Endothelial cell of umbilical vein (primary cell): ENCODE measurements at regions of chr4 and their contacts with region 1.

Region 1: DNA sequence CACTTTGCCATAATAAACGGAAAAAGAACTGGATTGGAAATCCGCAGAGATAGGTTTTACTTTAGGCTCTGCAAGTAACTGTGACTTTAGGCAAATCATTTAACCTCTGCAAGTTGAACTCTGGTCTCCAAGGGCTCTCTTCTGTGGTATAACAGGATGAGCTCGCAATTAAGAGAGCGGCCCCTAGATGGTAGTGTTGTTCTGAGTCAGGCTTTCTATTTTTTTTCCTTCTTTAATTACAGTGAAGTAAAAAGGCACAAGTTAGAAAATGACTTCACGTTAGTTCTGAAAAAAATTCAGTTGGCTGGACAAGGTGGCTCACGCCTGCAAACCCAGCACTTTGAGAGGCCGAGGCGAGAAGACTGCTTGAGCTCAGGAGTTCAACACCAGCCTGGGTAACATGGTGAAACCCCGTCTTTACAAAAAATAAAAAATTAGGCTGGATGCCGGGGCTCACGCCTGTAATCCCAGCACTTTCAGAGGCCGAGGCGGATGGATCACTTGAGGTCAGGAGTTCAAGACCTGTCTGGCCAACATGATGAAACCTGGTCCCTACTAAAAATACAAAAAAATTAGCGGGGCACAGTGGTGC is 18.0 kb downstream of the RPS3A start:
- DNase-seq: peak; percentile 86
- H3K4me3 ChIP-seq: no peak overlapping the region
- H3K27ac ChIP-seq: no peak overlapping the region
- H3K4me1 ChIP-seq: no peaks in the 10 kb centered on the region
- H3K27me3 ChIP-seq: no peaks in the 10 kb centered on the region
- CTCF ChIP-seq: peak; percentile 53 to 61
- POLR2A ChIP-seq: no peak

Region 2: DNA sequence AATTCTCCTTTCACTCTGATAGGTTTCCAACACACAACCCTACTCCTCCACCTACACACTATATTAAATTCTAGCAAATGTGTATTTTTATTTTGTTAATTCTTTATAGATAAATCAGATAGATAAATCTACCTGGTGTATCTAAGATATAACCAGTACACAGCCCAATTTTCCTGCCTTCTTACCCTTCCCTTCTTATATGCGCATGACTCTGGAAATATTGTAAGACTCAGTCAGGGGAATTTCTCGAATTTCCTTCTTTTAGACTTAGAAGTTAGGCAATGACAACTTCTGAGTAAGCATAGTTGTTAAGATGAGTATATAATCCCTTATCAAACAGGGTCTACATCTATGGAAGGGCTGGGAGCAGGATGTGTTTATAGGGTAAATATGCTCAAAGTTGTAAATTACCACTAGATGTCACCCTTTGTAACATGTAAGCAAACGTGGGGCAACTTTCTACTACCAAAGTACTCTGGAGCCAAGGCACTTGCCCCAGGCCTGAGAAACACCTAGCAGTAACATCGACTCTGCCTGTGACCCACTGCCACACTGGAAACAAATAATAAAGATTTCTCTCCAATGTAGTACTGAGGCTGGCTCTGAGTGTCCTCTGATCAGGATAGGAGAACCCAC is 1746.6 kb before region 1 on chr4:
- CTCF ChIA-PET with region 1: no interaction called
- POLR2A ChIA-PET with region 1: no interaction called
- dilution Hi-C with region 1: no loop called
- intact Hi-C with region 1: no loop called
- DNase-seq: peak; percentile 46
- H3K4me3 ChIP-seq: no peak overlapping the region
- H3K27ac ChIP-seq: no peak overlapping the region
- H3K4me1 ChIP-seq: no peaks in the 10 kb centered on the region
- H3K27me3 ChIP-seq: no peaks in the 10 kb centered on the region
- CTCF ChIP-seq: peak in 1 of 2 donors; percentile 16
- POLR2A ChIP-seq: no peak

Region 3: GRCh38 chr4:151276787-151277562 is 159.5 kb after region 1 on chr4 and contains the start of gene PRSS48:
- CTCF ChIA-PET with region 1: interaction called, 17 read pairs
- POLR2A ChIA-PET with region 1: no interaction called
- dilution Hi-C with region 1: no loop called
- intact Hi-C with region 1: loop called (anchors 1 kb)
- DNase-seq: peak; percentile 65
- H3K4me3 ChIP-seq: no peak within 1 kb of the TSS
- H3K27ac ChIP-seq: no peak within 1 kb of the TSS
- H3K4me1 ChIP-seq: no peaks in the 10 kb centered on the region
- H3K27me3 ChIP-seq: no peaks in the 10 kb centered on the region
- CTCF ChIP-seq: peak; percentile 87 to 88
- POLR2A ChIP-seq: no peak
- total RNA-seq, gene PRSS48: not detected in 2 replicates

Region 4: DNA sequence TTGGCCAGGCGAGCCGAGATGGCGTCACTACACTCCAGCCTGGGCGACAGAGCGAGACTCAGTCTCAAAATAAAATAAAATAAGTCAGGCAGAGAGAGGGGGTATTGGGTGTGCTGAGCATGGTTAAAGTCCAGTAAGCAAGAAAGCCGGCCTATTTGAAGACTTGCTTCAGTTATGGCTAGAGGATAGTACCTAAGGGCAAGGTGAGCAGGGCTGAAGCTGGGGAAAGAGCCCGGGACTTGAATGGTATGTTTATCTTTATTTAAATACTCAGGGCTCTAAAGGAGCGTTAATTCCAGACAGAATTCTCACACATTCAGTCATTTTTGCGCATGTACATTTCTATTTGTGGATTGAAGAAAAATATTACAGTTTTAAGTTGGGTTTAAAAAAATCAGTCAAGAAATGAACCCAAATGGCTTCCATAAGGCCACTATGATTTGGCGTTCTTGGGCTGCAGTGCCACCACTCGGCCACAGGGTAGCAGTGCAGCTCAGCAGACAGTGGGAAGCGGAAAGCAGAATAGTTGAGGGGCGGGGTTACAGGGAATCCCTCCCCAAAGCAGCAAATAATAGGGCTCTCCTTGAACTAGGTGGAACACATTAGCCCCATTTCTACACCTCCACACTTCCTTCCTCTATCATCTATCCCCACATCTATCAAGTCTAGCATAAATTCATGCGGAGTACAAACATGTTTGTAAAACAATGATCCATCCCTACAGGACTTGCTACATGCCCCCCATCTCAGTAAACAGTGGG is 245.1 kb after region 1 on chr4:
- CTCF ChIA-PET with region 1: interaction called, 26 read pairs
- POLR2A ChIA-PET with region 1: no interaction called
- dilution Hi-C with region 1: no loop called
- intact Hi-C with region 1: loop called (anchors 1 kb)
- DNase-seq: peak; percentile 87
- H3K4me3 ChIP-seq: no peak overlapping the region
- H3K27ac ChIP-seq: no peak overlapping the region
- H3K4me1 ChIP-seq: no peaks in the 10 kb centered on the region
- H3K27me3 ChIP-seq: no peaks in the 10 kb centered on the region
- CTCF ChIP-seq: peak; percentile 96 to 100
- POLR2A ChIP-seq: no peak

Region 5: GRCh38 chr4:151604238-151604637 is 486.8 kb after region 1 on chr4:
- CTCF ChIA-PET with region 1: interaction called, 63 read pairs
- POLR2A ChIA-PET with region 1: no interaction called
- dilution Hi-C with region 1: no loop called
- intact Hi-C with region 1: loop called (anchors 1 kb)
- DNase-seq: peak; percentile 33
- H3K4me3 ChIP-seq: no peak overlapping the region
- H3K27ac ChIP-seq: no peak overlapping the region
- H3K4me1 ChIP-seq: no peaks in the 10 kb centered on the region
- H3K27me3 ChIP-seq: peaks cover 0 to 7% of the 10 kb centered on the region in 2 experiments
- CTCF ChIP-seq: peak; percentile 29 to 44
- POLR2A ChIP-seq: no peak

Region 6: DNA sequence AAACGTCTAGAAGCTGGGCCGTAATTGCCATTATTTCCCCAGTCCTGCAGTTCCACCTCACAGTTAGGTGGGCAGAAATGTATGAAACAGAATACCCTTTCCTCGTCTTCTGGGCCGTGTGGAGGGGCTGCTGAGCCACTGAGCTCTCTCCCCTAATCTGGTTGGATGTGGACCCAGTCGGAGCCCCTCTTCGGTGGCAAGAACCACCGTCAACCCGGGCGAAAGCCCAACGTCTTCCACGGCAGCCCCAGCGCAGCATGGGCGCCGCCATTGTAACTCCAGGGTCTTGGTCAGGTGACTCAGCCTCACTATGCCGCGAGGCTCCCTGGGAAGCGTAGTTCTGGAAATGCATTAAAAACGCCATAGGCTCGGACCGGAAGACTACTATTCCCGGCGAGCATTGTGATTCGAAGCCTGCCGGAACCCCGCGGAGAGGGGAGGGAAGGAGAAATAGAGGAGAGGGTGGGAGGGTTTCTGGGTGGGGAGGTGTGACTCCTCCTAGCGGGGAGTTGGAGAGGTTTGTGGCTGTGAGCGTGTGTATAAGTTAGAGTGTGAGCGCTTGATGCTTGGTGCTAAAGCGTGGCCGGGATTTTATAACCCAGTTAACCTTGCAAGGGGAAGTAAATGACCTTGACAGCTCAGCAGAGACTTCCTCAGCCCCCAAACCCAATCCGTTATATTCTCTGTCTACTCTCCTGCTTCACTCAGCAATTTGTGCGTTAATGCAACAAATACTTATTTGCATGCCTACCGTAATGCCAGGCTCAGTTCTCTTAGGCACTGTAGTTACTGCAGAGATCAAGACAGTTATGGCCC is 643.5 kb after region 1 on chr4 and contains the start of gene GATB:
- CTCF ChIA-PET with region 1: no interaction called
- POLR2A ChIA-PET with region 1: no interaction called
- dilution Hi-C with region 1: no loop called
- intact Hi-C with region 1: loop called (anchors 5 kb)
- DNase-seq: peak; percentile 98
- H3K4me3 ChIP-seq: peak within 1 kb of the TSS; percentile 59 to 95 (median 78)
- H3K27ac ChIP-seq: peak within 1 kb of the TSS; percentile 63
- H3K4me1 ChIP-seq: peaks cover 10% of the 10 kb centered on the region
- H3K27me3 ChIP-seq: peaks cover 0 to 3% of the 10 kb centered on the region in 2 experiments
- CTCF ChIP-seq: peak in 1 of 2 donors; percentile 72
- POLR2A ChIP-seq: peak; percentile 79
- total RNA-seq, gene GATB: 17.7 and 20.7 TPM in 2 replicates